ENCODE measurements at regions of chr13 and their contacts with region 1.

Region 1: GRCh38 chr13:52599848-52600603 is 42.2 kb upstream of the HNRNPA1L2 start:
- DNase-seq: peak; percentile 14
- H3K4me3 ChIP-seq: peak overlapping the region; percentile 43
- H3K27ac ChIP-seq: peak overlapping the region; percentile 13
- H3K4me1 ChIP-seq: no peaks in the 10 kb centered on the region
- H3K27me3 ChIP-seq: no peaks in the 10 kb centered on the region
- CTCF ChIP-seq: no peak

Region 2: GRCh38 chr13:52652196-52652979 is 52.4 kb after region 1 on chr13 and contains the start of gene SUGT1:
- CTCF ChIA-PET with region 1: no interaction called
- POLR2A ChIA-PET with region 1: no interaction called
- intact Hi-C with region 1: no loop called
- DNase-seq: peak; percentile 99
- H3K4me3 ChIP-seq: peak within 1 kb of the TSS; percentile 84
- H3K27ac ChIP-seq: peak within 1 kb of the TSS; percentile 97
- H3K4me1 ChIP-seq: peaks cover 7% of the 10 kb centered on the region
- H3K27me3 ChIP-seq: no peaks in the 10 kb centered on the region
- CTCF ChIP-seq: peak; percentile 77
- total RNA-seq, gene SUGT1: 104 and 132 TPM in 2 replicates

Region 3: GRCh38 chr13:52749419-52749818 is 149.4 kb after region 1 on chr13:
- CTCF ChIA-PET with region 1: no interaction called
- POLR2A ChIA-PET with region 1: no interaction called
- intact Hi-C with region 1: no loop called
- DNase-seq: no peak
- H3K4me3 ChIP-seq: no peak overlapping the region
- H3K27ac ChIP-seq: no peak overlapping the region
- H3K4me1 ChIP-seq: no peaks in the 10 kb centered on the region
- H3K27me3 ChIP-seq: no peaks in the 10 kb centered on the region
- CTCF ChIP-seq: no peak

Region 4: DNA sequence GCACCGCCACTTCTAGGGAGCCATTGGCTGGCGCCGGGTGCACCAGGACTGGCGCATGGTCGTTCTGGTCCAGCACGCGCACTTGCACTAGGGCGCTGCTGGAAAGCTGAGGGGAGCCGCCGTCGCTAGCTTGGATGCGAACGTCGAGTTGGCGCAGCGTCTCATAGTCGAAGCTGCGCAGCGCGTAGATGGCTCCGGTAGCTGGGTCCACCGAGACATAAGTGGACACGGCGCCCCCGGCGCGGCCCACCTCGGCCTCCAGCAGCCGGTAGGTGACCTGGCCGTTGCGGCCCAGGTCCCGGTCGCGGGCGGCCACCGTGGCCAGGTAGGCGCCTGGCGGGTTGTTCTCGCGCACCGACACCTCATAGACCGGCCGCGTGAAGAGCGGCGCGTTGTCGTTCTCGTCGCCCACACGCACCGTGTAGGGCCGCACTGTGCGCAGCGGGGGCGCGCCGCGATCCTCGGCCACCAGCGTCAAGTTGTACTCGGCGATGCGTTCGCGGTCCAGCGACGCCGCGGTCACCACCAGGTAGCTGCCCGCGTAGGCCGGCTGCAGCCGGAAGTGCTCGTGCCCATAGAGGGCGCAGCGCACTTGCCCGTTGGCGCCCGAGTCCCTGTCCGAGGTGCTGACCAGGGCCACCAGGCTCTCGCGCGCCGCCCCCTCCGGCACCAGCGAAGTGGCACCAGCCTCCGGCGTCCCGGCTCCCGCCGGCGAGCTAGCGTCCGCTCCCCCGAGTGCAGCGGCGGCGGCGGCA is 246.7 kb after region 1 on chr13:
- CTCF ChIA-PET with region 1: no interaction called
- POLR2A ChIA-PET with region 1: no interaction called
- intact Hi-C with region 1: loop called (anchors 5 kb)
- DNase-seq: peak; percentile 74
- H3K4me3 ChIP-seq: peak overlapping the region; percentile 28
- H3K27ac ChIP-seq: no peak overlapping the region
- H3K4me1 ChIP-seq: peaks cover 38% of the 10 kb centered on the region
- H3K27me3 ChIP-seq: peaks cover 71% of the 10 kb centered on the region
- CTCF ChIP-seq: peak; percentile 66

Region 5: DNA sequence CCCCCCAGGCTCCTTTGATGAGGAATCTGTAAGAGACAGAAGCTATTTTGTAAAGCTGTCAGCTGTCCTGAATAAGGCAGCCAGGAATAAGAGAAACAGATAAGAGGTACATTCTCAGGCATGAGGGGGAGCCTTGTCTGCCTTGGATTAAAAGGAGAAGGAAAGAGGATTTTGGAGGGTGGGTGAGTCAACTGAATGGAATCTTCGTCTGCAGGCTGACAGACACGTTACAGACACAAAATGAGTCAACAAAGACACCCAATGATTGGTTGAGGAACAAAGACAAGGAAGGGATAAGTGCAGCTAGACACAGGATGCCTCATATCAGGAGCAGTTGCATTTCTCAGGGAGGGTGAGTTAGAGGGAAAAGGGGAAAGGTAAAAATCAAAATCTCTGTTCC is 591.1 kb after region 1 on chr13:
- CTCF ChIA-PET with region 1: no interaction called
- POLR2A ChIA-PET with region 1: no interaction called
- intact Hi-C with region 1: loop called (anchors 10 kb)
- DNase-seq: peak; percentile 84
- H3K4me3 ChIP-seq: no peak overlapping the region
- H3K27ac ChIP-seq: no peak overlapping the region
- H3K4me1 ChIP-seq: no peaks in the 10 kb centered on the region
- H3K27me3 ChIP-seq: no peaks in the 10 kb centered on the region
- CTCF ChIP-seq: no peak

Measured in A673 (cell line).